A673 (cell line): ENCODE measurements at regions of chr15 and their contacts with region 1.

Region 1: DNA sequence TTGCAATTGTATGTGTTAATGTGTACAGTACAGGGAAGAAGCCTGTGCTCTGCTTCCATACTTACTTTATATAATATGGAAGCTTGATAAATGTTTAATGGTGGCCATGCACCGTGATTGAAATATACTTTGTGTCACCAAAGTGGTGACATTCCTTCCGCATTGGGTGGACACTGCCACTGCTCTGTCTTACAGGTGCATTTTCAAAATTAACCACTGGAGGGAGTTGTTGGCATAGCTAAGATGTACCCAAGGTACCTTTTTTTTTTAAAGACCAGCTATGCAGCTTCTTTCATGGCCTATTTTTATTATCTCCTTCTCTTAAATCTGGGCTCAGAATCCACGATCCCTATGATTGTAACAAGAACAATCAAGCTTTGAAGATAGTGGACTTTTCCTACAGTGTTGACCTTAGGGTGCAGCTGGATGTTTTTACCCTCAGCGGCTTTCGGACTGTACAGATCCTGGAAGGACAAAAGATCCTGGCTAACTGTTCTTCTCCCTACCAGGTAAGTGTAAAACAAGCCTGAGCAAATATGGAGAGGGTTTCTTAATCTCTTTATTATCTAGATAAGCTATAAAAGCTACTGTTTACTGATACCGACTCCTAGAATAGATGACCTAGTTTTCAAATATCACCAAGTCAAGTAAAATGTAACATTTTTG is 21.6 kb upstream of the PAK6 start:
- DNase-seq: peak; percentile 78
- H3K4me3 ChIP-seq: no peak overlapping the region
- H3K27ac ChIP-seq: no peak overlapping the region
- H3K4me1 ChIP-seq: no peaks in the 10 kb centered on the region
- H3K27me3 ChIP-seq: no peaks in the 10 kb centered on the region
- CTCF ChIP-seq: peak; percentile 84

Region 2: DNA sequence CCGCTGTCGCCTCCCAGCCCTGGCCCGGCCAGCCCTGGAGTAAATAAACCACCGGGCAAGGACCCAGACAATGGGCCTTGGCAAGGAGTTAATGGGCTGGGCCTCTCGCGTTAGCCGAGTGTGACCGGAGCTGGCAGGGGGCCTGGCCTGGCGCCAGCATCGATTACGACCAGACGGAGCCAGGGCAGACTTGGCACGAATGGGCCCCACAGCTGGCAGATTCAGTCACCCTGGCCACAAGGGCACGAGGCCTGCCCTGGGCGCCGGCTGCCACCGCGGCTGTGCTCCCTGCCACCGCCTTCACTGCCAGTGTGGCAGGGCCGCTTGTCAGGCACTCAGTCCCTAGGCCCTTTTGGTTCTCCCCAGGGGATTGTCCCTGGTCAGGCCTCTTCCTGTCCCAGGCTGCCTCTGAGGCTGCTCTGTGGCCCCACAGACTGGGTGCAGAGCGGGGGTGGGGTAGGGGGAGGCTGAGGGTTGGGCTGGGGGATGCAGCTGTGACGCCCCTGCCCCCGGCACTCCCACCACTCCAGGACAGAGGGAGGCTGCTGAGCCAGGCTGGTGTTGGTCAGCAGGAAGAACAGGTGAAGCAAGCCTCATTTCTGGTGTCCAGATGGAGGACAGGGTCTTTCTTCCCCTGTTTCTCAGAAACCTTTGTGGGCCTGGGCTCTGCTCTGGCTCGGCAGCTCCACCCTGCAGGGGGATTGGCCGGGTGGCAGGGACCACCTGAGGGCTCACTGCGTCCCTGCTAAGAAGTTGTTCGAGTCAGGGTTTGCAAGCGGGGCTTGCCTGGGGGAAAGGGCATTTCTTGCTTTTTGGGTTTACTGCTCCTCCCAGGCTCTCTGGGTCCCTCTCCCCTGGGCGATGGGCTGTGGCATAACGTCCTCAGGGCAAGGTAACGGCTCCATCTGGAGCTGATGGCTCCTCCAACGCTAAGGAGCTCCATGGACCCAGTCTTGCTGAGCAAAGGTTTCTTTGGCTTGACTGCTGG is 147.8 kb before region 1 on chr15:
- CTCF ChIA-PET with region 1: no interaction called
- POLR2A ChIA-PET with region 1: no interaction called
- intact Hi-C with region 1: no loop called
- DNase-seq: peak; percentile 87
- H3K4me3 ChIP-seq: no peak overlapping the region
- H3K27ac ChIP-seq: peak overlapping the region; percentile 71
- H3K4me1 ChIP-seq: peaks cover 20% of the 10 kb centered on the region
- H3K27me3 ChIP-seq: no peaks in the 10 kb centered on the region
- CTCF ChIP-seq: no peak

Region 3: GRCh38 chr15:40175160-40175559 is 42.1 kb before region 1 on chr15:
- CTCF ChIA-PET with region 1: no interaction called
- POLR2A ChIA-PET with region 1: no interaction called
- intact Hi-C with region 1: loop called (anchors 5 kb)
- DNase-seq: no peak
- H3K4me3 ChIP-seq: no peak overlapping the region
- H3K27ac ChIP-seq: no peak overlapping the region
- H3K4me1 ChIP-seq: no peaks in the 10 kb centered on the region
- H3K27me3 ChIP-seq: no peaks in the 10 kb centered on the region
- CTCF ChIP-seq: no peak

Region 4: DNA sequence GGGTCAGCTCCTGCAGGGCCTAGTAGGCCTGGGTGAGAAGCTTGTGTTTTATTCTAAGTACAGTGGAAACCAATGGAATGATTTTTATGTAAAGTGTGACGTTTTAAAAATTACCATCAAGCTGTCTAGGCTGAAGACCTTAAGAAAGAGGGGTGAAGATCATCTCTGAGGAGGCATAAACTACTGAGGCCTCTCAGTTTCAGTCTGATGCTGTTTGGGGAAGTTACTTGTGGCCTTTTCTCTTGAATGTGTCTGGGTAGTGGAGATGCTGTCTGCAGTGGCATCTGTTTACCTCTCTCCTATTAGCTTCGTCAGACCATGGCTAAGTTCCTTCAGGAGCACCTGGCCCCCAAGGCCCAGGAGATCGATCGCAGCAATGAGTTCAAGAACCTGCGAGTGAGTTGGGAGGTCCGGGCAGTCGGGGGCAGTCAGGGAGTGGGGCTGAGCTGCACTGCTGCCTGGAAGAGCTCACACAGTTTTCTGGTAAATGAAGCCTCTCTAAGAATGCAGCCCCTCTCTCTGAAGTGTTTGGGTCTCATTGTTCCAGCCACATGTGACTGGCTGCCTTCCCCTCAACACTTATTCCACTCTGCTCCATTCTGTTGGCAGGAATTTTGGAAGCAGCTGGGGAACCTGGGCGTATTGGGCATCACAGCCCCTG is 190.2 kb after region 1 on chr15:
- CTCF ChIA-PET with region 1: no interaction called
- POLR2A ChIA-PET with region 1: no interaction called
- intact Hi-C with region 1: no loop called
- DNase-seq: no peak
- H3K4me3 ChIP-seq: no peak overlapping the region
- H3K27ac ChIP-seq: no peak overlapping the region
- H3K4me1 ChIP-seq: peaks cover 10% of the 10 kb centered on the region
- H3K27me3 ChIP-seq: no peaks in the 10 kb centered on the region
- CTCF ChIP-seq: no peak